H1 (cell line): ENCODE measurements at regions of chr5 and their contacts with region 1.

Region 1: GRCh38 chr5:176388444-176389134 is at the starts of genes HIGD2A and NOP16:
- DNase-seq: peak; percentile 93 to 96
- H3K4me3 ChIP-seq: peak within 1 kb of the TSS; percentile 92 to 96 (median 95)
- H3K27ac ChIP-seq: peak within 1 kb of the TSS; percentile 98
- H3K4me1 ChIP-seq: peaks cover 0 to 5% (median 1%) of the 10 kb centered on the region in 4 experiments; a peak in 2 of 7 replicates
- H3K27me3 ChIP-seq: no peaks in the 10 kb centered on the region
- CTCF ChIP-seq: no peak
- EP300 ChIP-seq: peak in 1 of 2 experiments; percentile 66; a peak in 1 of 3 replicates
- POLR2A ChIP-seq: peak; percentile 82 to 87
- RAD21 ChIP-seq: no peak
- total RNA-seq, gene HIGD2A: 95.5 and 104 TPM in 2 replicates
- total RNA-seq, gene NOP16: 65.2 and 65.9 TPM in 2 replicates

Region 2: DNA sequence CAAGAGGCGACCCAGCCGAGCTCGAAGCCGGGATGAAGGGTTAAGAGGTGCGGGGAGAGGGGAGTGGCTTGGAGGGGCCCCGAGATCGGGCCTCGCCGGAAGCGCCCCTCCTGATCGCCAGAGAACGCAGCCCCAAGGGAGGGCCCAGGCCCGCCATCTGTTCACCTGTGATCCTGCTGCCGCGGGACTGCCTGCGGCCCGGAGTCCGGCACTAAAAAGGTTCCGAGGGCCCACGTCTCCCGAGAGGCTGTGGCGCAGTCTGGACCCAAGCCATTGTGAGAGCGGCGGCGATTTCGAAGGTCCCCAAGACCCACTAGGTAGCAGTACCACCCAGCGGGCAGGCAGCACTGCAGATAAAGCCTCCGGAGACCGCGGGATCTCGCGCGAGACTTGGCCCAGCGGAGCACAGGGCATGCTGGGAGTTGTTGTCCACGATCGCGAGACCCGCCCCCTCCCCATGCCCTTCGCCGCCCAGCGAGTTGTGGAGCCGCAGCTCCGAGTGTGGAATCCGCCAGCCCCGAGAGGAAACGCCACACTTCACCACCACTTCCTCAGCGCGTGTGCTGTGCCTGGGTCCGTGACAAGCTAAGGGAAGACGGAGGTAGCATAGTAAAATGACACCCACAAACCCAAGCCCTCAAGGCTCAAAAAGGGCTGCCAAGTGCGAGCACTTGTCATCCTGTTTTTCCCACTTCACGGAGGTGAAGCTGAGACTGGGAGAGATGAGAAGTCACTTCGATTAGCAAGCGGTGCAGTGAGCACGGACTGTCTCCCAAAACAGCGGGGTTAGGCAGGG is 27.0 kb before region 1 on chr5 and contains the start of gene KIAA1191:
- CTCF ChIA-PET with region 1: no interaction called
- POLR2A ChIA-PET with region 1: interaction called, 30 read pairs
- DNase-seq: peak in 1 of 2 experiments; percentile 90
- H3K4me3 ChIP-seq: peak within 1 kb of the TSS; percentile 79 to 95 (median 92)
- H3K27ac ChIP-seq: peak within 1 kb of the TSS; percentile 88
- H3K4me1 ChIP-seq: peaks cover 0 to 5% (median 3%) of the 10 kb centered on the region in 4 experiments; a peak in 4 of 7 replicates
- H3K27me3 ChIP-seq: peaks cover 7 to 37% (median 30%) of the 10 kb centered on the region in 4 experiments
- CTCF ChIP-seq: peak in 1 of 3 experiments; percentile 5; a peak in 2 of 4 replicates
- EP300 ChIP-seq: no peak
- POLR2A ChIP-seq: peak; percentile 93 to 98
- RAD21 ChIP-seq: 0 out of 4 replicates have a peak, but pooled peaks of 1 of the 2 experiments have one; percentile 1
- total RNA-seq, gene KIAA1191: 88.0 and 96.4 TPM in 2 replicates

Region 3: DNA sequence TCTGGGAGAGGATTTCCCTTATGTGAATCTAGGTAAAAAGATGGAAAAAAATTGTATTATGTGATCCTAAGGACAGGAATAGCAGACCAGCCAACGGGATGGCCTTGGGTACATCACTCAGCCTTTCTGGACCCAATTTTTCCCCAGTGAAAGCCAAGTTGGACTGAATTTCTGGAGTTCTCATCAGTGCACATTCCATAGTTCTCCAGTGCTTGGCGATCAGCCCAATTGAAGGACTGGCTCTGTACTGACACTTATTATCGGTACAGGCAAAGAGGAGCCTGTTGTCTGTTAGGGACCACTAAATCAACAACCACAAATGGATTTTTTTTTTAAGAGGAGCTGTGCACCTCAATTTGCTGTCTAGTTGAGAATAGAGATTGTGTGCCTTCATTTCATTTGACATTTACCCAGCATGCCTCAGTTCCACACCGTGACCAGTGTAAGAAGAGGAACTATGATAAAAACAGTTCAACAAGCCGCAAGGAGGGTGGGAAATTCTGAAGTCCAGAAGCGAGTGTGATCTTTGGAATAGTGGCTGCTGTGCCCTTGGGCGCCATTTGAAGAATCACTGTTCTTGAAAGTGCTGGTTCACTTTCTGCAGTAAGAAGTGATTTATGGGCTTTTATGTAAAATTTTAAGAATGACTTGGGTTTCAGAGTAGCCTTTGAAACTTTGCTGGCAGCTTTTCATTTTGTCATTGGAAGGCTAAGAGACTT is 15.3 kb before region 1 on chr5:
- CTCF ChIA-PET with region 1: no interaction called
- POLR2A ChIA-PET with region 1: interaction called, 93 read pairs
- DNase-seq: no peak
- H3K4me3 ChIP-seq: no peak overlapping the region
- H3K27ac ChIP-seq: no peak overlapping the region
- H3K4me1 ChIP-seq: no peaks in the 10 kb centered on the region
- H3K27me3 ChIP-seq: no peaks in the 10 kb centered on the region
- CTCF ChIP-seq: no peak
- EP300 ChIP-seq: no peak
- POLR2A ChIP-seq: no peak
- RAD21 ChIP-seq: no peak

Region 4: GRCh38 chr5:176405656-176406427 is 17.3 kb after region 1 on chr5:
- CTCF ChIA-PET with region 1: interaction called, 83 read pairs
- POLR2A ChIA-PET with region 1: interaction called, 57 read pairs
- DNase-seq: peak in 1 of 2 experiments; percentile 53
- H3K4me3 ChIP-seq: no peak overlapping the region
- H3K27ac ChIP-seq: no peak overlapping the region
- H3K4me1 ChIP-seq: no peaks in the 10 kb centered on the region; a peak in 1 of 7 replicates
- H3K27me3 ChIP-seq: no peaks in the 10 kb centered on the region
- CTCF ChIP-seq: peak; percentile 77 to 90 (median 90)
- EP300 ChIP-seq: no peak
- POLR2A ChIP-seq: no peak
- RAD21 ChIP-seq: peak; percentile 57 to 70

Region 5: DNA sequence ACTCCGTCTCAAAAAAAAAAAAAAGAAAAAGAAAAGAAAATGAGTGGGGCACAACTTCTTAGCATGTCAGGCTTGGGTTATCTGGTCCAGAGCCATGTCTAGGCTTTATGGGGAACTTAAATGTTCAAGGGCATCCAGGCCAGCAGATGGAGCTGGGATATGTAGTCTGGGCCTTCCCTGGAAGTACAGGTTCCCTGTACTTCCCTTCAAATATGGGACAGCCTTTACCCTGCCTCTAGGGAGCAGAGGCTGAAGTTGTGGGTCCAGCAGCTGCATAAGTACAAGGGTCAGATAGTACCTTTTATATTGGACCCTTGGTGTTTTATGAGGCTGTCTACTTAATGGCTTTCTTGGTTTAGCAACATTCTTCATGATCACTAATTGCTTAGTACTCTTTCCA is 101.7 kb after region 1 on chr5:
- CTCF ChIA-PET with region 1: no interaction called
- POLR2A ChIA-PET with region 1: no interaction called
- DNase-seq: no peak
- H3K4me3 ChIP-seq: no peak overlapping the region
- H3K27ac ChIP-seq: no peak overlapping the region
- H3K4me1 ChIP-seq: no peaks in the 10 kb centered on the region
- H3K27me3 ChIP-seq: no peaks in the 10 kb centered on the region
- CTCF ChIP-seq: no peak
- EP300 ChIP-seq: no peak
- POLR2A ChIP-seq: no peak
- RAD21 ChIP-seq: no peak